Activated CD4-positive, alpha-beta memory T cell treated with anti-CD3 and anti-CD28 coated beads for 36 hours (primary cell): ENCODE measurements at regions of chr12 and their contacts with region 1.

Region 1: DNA sequence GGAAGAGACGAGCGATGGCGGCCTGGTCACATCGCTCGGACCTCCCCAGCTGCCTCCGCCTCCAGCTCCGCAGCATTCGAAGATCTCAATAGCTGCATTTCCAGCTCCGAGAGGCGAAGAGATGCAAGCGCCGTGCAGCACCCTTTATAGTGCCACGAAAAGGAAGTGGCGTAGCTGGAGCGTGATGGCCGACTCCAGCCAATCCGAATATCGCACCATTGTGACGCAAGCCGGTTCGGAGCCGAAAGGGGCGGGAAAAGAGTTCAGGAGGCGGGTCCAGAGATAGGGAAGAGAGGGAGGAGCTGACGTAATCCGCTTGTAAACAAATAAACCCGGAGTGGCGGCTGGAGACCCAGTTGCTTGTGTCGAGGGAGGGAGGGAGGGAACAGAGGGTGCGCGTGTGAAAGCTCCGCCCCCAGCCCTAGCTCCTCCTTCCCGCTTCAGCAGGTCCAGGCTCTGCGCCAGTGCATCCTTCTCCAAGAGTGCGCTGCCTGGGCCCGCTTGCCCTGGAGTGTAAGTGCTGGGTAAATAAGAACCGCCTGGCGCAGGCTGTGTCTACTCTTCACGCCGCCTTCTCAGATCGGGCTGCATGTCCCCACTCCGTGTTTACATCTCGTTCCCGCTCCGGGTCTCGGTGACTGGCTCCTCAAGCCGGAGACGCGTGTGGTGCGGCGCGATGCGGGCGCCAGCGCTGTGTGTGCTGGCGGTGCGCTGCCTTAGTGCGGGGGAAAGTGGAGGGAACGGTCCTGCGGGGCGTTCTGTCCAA is at the start of gene BTG1:
- DNase-seq: peak; percentile 100
- H3K4me3 Mint-ChIP-seq: peak within 1 kb of the TSS; percentile 100
- H3K27ac Mint-ChIP-seq: peak within 1 kb of the TSS; percentile 91
- H3K4me1 Mint-ChIP-seq: peaks cover 20% of the 10 kb centered on the region
- H3K27me3 Mint-ChIP-seq: peaks cover 2% of the 10 kb centered on the region
- total RNA-seq, gene BTG1: 137 to 144 TPM

Region 2: DNA sequence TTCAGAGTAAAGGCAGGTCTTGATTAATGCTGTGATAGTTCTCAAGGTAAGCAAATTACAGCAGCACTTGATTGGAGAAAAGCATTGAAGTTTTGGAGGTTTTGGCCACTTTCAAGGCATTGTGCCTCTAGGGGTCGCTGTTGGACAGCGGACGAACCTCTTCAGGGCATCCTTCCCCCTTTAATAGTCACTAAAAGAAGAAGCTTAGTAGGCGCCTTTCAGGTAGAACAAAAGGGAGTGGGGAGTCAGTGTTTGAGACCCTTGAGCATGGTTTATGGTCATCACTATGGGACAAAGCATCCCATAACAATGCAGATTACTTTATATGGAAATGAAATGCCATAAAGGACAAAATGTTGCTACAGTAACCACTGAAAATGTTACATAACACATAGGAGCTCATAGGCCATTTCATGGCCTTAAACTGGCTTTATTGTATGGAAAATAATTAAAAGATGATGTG is 763.8 kb before region 1 on chr12:
- CTCF ChIA-PET with region 1: interaction called, 13 read pairs
- POLR2A ChIA-PET with region 1: no interaction called
- intact Hi-C with region 1: loop called (anchors 2 kb)
- DNase-seq: peak; percentile 86
- H3K4me3 Mint-ChIP-seq: peak overlapping the region; percentile 60
- H3K27ac Mint-ChIP-seq: no peak overlapping the region
- H3K4me1 Mint-ChIP-seq: peaks cover 5% of the 10 kb centered on the region
- H3K27me3 Mint-ChIP-seq: peaks cover 4% of the 10 kb centered on the region

Region 3: GRCh38 chr12:91877022-91877421 is 268.9 kb before region 1 on chr12:
- CTCF ChIA-PET with region 1: interaction called, 3 read pairs
- POLR2A ChIA-PET with region 1: interaction called, 51 read pairs
- intact Hi-C with region 1: loop called (anchors 1 kb)
- DNase-seq: peak; percentile 91
- H3K4me3 Mint-ChIP-seq: peak overlapping the region; percentile 71
- H3K27ac Mint-ChIP-seq: peak overlapping the region; percentile 94
- H3K4me1 Mint-ChIP-seq: peaks cover 67% of the 10 kb centered on the region
- H3K27me3 Mint-ChIP-seq: no peaks in the 10 kb centered on the region

Region 4: GRCh38 chr12:92065018-92065499 is 80.9 kb before region 1 on chr12:
- CTCF ChIA-PET with region 1: no interaction called
- POLR2A ChIA-PET with region 1: interaction called, 11 read pairs
- intact Hi-C with region 1: loop called (anchors 1 kb)
- DNase-seq: peak; percentile 74
- H3K4me3 Mint-ChIP-seq: peak overlapping the region; percentile 59
- H3K27ac Mint-ChIP-seq: peak overlapping the region; percentile 82
- H3K4me1 Mint-ChIP-seq: peaks cover 49% of the 10 kb centered on the region
- H3K27me3 Mint-ChIP-seq: no peaks in the 10 kb centered on the region

Region 5: DNA sequence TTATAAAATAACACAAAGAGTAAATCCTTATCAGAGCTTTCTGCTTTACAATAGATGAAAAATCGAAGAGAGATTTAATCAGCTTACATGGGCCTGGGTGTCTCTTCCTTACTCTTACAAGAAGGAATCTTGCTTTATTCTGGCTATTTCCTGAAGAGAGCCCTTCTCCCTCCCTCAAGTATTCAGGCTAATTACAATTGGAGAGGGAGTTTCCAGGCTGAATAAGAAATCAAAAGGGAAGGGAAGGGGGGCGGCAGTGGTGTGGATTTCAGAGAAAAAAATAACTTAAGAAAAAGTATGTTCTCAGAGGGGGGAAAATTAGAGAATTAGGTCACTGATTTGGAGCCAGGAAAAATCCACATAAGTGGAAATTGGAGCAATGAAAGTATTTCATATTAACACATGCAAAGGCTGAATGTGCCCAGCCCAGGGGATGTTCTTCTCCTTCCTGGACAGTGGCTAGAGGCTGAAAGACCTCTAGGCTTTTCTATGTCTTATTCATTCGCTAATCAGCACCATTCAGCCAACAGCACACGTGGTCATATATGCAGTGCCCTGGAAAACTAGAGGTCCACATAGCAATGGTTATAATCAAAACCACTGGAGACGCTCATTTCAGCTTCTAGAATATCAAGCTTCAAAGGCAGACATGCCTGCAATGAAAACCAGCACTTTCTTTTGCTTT is 158.6 kb after region 1 on chr12:
- CTCF ChIA-PET with region 1: no interaction called
- POLR2A ChIA-PET with region 1: no interaction called
- intact Hi-C with region 1: loop called (anchors 5 kb)
- DNase-seq: no peak
- H3K4me3 Mint-ChIP-seq: no peak overlapping the region
- H3K27ac Mint-ChIP-seq: no peak overlapping the region
- H3K4me1 Mint-ChIP-seq: peaks cover 4% of the 10 kb centered on the region
- H3K27me3 Mint-ChIP-seq: no peaks in the 10 kb centered on the region

Region 6: DNA sequence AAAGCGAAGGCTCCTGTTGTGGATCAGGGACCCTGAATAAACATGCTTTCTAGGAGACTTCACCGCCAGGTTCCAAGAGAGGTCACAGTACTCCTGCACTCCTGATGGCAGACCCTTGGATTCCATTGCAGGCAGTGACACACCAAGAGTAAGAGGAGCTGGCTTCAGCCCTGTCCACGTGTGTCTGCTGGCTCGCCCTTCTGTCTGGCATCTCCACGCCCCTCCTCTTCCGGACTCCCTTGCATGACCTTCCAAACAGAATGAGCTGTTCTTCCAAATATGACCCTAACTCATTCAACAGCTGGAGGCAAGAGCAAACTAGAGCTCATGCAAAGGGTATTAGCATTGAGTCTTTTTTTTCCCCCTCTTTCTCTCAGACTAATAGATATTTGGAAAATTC is 323.9 kb after region 1 on chr12:
- CTCF ChIA-PET with region 1: no interaction called
- POLR2A ChIA-PET with region 1: interaction called, 8 read pairs
- intact Hi-C with region 1: loop called (anchors 2 kb)
- DNase-seq: no peak
- H3K4me3 Mint-ChIP-seq: no peak overlapping the region
- H3K27ac Mint-ChIP-seq: peak overlapping the region; percentile 83
- H3K4me1 Mint-ChIP-seq: peaks cover 38% of the 10 kb centered on the region
- H3K27me3 Mint-ChIP-seq: no peaks in the 10 kb centered on the region

Region 7: DNA sequence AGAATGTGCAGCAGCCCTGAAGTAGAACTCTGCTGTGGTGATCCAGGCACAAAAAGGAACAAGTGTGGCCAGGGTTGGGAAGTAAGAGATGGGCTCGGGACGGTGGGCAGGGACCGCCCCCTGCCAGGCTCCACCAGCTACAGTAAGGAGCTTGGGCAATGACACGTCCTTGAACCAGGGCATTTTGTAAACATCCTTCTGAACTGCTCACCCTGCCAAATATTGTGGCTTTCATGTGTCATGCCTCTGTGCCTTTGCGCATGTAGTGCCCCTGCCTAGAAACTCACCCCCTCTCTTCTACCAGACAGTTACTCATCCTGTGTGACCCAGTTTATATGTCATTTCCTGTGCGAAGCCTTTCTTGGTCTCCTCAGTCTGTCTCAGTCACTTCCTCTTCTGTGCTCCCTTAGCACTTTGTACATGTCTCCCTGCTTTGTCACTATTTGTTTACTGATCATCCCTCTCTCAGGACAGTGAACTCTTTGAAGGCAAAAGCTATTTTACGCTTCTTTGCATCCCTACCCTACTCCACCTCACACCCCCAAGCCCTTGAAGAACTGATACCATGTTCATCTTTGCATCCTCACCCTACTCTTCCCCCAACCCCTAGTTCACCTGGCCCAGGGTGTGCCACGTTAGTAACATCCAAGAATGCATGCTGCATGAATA is 448.0 kb after region 1 on chr12:
- CTCF ChIA-PET with region 1: no interaction called
- POLR2A ChIA-PET with region 1: interaction called, 7 read pairs
- intact Hi-C with region 1: loop called (anchors 1 kb)
- DNase-seq: peak; percentile 87
- H3K4me3 Mint-ChIP-seq: peak overlapping the region; percentile 25
- H3K27ac Mint-ChIP-seq: peak overlapping the region; percentile 92
- H3K4me1 Mint-ChIP-seq: peaks cover 80% of the 10 kb centered on the region
- H3K27me3 Mint-ChIP-seq: no peaks in the 10 kb centered on the region